ENCODE measurements at regions of chr5 and their contacts with region 1.

Region 1: DNA sequence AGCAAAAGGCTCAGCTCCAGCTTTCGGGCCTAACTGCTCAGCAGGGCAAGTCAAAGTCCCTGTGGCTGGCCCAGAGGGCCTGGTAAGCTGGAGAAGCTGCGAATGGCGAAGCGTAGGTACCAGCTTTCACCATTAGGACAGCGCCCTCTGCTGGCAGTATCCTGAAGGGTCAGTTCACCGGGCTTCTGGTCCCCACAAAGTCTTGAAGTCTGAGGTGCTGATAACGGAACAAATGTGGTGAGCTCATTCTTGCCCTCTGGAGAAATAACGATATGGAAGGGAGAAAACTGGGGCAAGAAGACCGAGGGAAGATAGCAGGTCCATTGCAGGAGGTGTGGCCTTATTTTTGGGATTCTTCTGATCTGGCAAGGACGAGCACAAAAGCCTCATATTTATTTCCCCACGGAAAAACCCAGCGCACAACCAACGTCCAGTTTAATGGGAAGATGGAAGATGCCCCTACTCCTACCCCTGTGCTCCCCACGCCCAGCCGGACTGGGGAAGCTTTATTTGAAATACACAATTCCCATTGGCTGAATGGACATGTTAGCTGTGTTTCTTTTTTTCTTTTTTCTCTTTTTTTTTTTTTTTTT is 7.2 kb downstream of the SOWAHA start:
- DNase-seq: peak; percentile 94
- H3K4me3 Mint-ChIP-seq: no peak overlapping the region
- H3K27ac Mint-ChIP-seq: no peak overlapping the region
- H3K4me1 Mint-ChIP-seq: peaks cover 9% of the 10 kb centered on the region
- H3K27me3 Mint-ChIP-seq: no peaks in the 10 kb centered on the region
- CTCF ChIP-seq: peak; percentile 91

Region 2: GRCh38 chr5:132526290-132526973 is 293.8 kb before region 1 on chr5:
- CTCF ChIA-PET with region 1: interaction called, 6 read pairs
- intact Hi-C with region 1: loop called (anchors 1 kb)
- DNase-seq: peak; percentile 83
- H3K4me3 Mint-ChIP-seq: peak overlapping the region; percentile 42
- H3K27ac Mint-ChIP-seq: peak overlapping the region; percentile 12
- H3K4me1 Mint-ChIP-seq: peaks cover 11% of the 10 kb centered on the region
- H3K27me3 Mint-ChIP-seq: peaks cover 40% of the 10 kb centered on the region
- CTCF ChIP-seq: peak; percentile 95

Region 3: GRCh38 chr5:132629230-132629944 is 190.9 kb before region 1 on chr5:
- CTCF ChIA-PET with region 1: no interaction called
- intact Hi-C with region 1: no loop called
- DNase-seq: no peak
- H3K4me3 Mint-ChIP-seq: no peak overlapping the region
- H3K27ac Mint-ChIP-seq: no peak overlapping the region
- H3K4me1 Mint-ChIP-seq: no peaks in the 10 kb centered on the region
- H3K27me3 Mint-ChIP-seq: no peaks in the 10 kb centered on the region
- CTCF ChIP-seq: no peak

Region 4: GRCh38 chr5:132736853-132737833 is 83.1 kb before region 1 on chr5 and contains the start of gene KIF3A:
- CTCF ChIA-PET with region 1: interaction called, 11 read pairs
- intact Hi-C with region 1: no loop called
- DNase-seq: peak; percentile 98
- H3K4me3 Mint-ChIP-seq: peak within 1 kb of the TSS; percentile 91
- H3K27ac Mint-ChIP-seq: peak within 1 kb of the TSS; percentile 69
- H3K4me1 Mint-ChIP-seq: peaks cover 31% of the 10 kb centered on the region
- H3K27me3 Mint-ChIP-seq: no peaks in the 10 kb centered on the region
- CTCF ChIP-seq: no peak
- total RNA-seq, gene KIF3A: 17.5 and 18.9 TPM in 2 replicates

Region 5: DNA sequence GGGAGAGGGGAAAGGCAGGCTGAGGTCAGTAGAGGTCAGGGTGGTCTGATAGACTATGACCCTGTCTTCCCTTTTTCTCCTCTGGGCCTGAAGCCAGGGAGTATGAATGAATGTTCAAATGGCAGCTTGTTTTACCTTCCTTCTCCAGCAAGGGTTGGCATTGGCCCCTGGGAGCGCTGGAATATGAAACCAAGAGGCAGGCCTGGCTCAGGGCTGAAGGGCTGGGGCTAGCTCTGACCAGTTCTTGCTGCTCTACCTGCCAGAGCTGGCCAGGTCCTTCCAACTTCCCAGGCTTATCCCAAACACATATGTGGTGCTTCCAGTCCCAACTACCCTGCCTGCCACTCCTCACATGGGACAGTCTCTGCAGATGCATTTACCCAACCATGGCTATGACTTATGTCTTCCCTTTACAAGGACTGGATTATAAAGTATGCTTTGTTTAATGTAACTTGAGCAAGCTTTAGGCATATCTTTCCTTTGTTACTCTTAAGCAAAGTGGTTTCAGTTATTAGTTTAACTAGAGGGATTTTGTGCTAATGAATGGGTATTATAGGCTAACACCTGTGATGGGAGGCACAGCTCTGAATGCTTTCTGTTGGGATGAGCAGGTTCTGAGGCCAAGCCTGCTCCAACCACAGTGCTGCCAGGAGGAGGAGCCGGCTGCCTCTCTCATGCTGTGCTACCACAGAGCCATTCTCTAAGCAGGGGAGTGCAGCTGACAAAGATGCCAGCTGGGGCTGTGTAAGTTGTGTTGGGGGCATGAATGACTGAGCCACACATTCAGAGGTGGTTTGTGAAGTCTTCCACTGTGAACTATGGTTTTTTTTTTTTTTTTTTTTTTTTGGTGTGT is 66.9 kb before region 1 on chr5:
- CTCF ChIA-PET with region 1: interaction called, 52 read pairs
- intact Hi-C with region 1: loop called (anchors 1 kb)
- DNase-seq: peak; percentile 30
- H3K4me3 Mint-ChIP-seq: no peak overlapping the region
- H3K27ac Mint-ChIP-seq: no peak overlapping the region
- H3K4me1 Mint-ChIP-seq: no peaks in the 10 kb centered on the region
- H3K27me3 Mint-ChIP-seq: no peaks in the 10 kb centered on the region
- CTCF ChIP-seq: no peak

Region 6: GRCh38 chr5:132807163-132807838 is 13.0 kb before region 1 on chr5:
- CTCF ChIA-PET with region 1: interaction called, 91 read pairs
- intact Hi-C with region 1: no loop called
- DNase-seq: peak; percentile 91
- H3K4me3 Mint-ChIP-seq: peak overlapping the region; percentile 8
- H3K27ac Mint-ChIP-seq: no peak overlapping the region
- H3K4me1 Mint-ChIP-seq: peaks cover 31% of the 10 kb centered on the region
- H3K27me3 Mint-ChIP-seq: peaks cover 10% of the 10 kb centered on the region
- CTCF ChIP-seq: peak; percentile 45